ENCODE measurements at regions of chr2 and their contacts with region 1.

Region 1: GRCh38 chr2:158024288-158024898 is 77.3 kb upstream of the UPP2 start:
- DNase-seq: peak; percentile 68
- H3K4me3 Mint-ChIP-seq: no peak overlapping the region
- H3K27ac Mint-ChIP-seq: peak overlapping the region; percentile 12
- H3K4me1 Mint-ChIP-seq: peaks cover 8% of the 10 kb centered on the region
- H3K27me3 Mint-ChIP-seq: peaks cover 11% of the 10 kb centered on the region

Region 2: GRCh38 chr2:157777427-157777826 is 247.0 kb before region 1 on chr2:
- CTCF ChIA-PET with region 1: interaction called, 15 read pairs
- DNase-seq: peak; percentile 73
- H3K4me3 Mint-ChIP-seq: no peak overlapping the region
- H3K27ac Mint-ChIP-seq: no peak overlapping the region
- H3K4me1 Mint-ChIP-seq: peaks cover 12% of the 10 kb centered on the region
- H3K27me3 Mint-ChIP-seq: no peaks in the 10 kb centered on the region

Region 3: DNA sequence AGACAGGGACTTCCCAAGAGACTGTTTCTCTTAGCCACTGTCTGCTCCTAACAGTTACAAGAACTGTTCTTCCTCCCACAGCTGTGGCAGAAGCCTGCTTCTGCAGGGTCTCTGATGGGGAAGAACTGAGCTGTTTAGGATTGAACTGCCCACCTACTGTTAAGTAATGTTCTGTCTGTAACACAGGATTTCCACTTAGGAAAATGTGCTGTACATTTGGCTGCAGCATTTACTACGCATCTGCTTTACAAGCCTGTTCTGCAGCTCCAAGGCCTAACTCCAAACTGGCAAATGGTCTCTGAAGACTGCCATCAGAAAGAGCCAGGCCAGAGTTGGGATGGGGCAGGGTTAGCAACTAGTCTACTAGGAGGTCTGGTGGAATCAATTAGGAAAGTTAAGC is 10.5 kb before region 1 on chr2:
- CTCF ChIA-PET with region 1: interaction called, 13 read pairs
- DNase-seq: no peak
- H3K4me3 Mint-ChIP-seq: no peak overlapping the region
- H3K27ac Mint-ChIP-seq: no peak overlapping the region
- H3K4me1 Mint-ChIP-seq: peaks cover 27% of the 10 kb centered on the region
- H3K27me3 Mint-ChIP-seq: peaks cover 4% of the 10 kb centered on the region

Region 4: DNA sequence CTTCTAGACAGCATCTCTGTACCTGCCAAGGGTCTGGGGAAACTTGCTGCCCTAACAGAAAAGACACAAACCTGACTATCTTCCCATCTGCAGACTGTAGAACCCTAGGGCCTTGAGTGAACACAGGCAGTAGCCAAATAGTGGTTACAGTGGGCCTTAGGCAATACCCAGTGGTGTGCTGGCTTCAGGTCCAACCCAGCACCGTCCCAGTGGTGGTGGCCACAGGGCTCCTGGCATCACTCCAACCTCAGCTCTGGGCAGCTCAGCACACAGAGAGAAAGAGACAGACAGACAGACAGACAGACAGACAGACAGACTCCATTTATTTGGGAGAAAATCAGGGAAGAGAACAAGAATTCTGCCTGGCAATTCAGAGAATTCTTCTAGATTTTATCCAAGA is 48.0 kb after region 1 on chr2:
- CTCF ChIA-PET with region 1: no interaction called
- DNase-seq: no peak
- H3K4me3 Mint-ChIP-seq: no peak overlapping the region
- H3K27ac Mint-ChIP-seq: no peak overlapping the region
- H3K4me1 Mint-ChIP-seq: no peaks in the 10 kb centered on the region
- H3K27me3 Mint-ChIP-seq: peaks cover 10% of the 10 kb centered on the region

Region 5: GRCh38 chr2:158745044-158745865 is 720.9 kb after region 1 on chr2:
- CTCF ChIA-PET with region 1: interaction called, 54 read pairs
- DNase-seq: peak; percentile 50
- H3K4me3 Mint-ChIP-seq: no peak overlapping the region
- H3K27ac Mint-ChIP-seq: no peak overlapping the region
- H3K4me1 Mint-ChIP-seq: no peaks in the 10 kb centered on the region
- H3K27me3 Mint-ChIP-seq: peaks cover 28% of the 10 kb centered on the region

Region 6: GRCh38 chr2:158753641-158754611 is 729.5 kb after region 1 on chr2:
- CTCF ChIA-PET with region 1: interaction called, 14 read pairs
- DNase-seq: peak; percentile 39
- H3K4me3 Mint-ChIP-seq: no peak overlapping the region
- H3K27ac Mint-ChIP-seq: no peak overlapping the region
- H3K4me1 Mint-ChIP-seq: no peaks in the 10 kb centered on the region
- H3K27me3 Mint-ChIP-seq: peaks cover 7% of the 10 kb centered on the region

Measured in activated naive CD4-positive, alpha-beta T cell treated with anti-CD3 and anti-CD28 coated beads, Interleukin-2, amount 10 ng/mL, durations not matched to agents 7 days and 5 days (primary cell).